ENCODE measurements at regions of chr12 and their contacts with region 1.

Region 1: GRCh38 chr12:122356192-122356635 is 66.3 kb downstream of the CLIP1 start:
- DNase-seq: peak; percentile 74
- H3K4me3 Mint-ChIP-seq: no peak overlapping the region
- H3K27ac Mint-ChIP-seq: peak overlapping the region; percentile 21
- H3K4me1 Mint-ChIP-seq: peaks cover 14% of the 10 kb centered on the region
- H3K27me3 Mint-ChIP-seq: no peaks in the 10 kb centered on the region

Region 2: DNA sequence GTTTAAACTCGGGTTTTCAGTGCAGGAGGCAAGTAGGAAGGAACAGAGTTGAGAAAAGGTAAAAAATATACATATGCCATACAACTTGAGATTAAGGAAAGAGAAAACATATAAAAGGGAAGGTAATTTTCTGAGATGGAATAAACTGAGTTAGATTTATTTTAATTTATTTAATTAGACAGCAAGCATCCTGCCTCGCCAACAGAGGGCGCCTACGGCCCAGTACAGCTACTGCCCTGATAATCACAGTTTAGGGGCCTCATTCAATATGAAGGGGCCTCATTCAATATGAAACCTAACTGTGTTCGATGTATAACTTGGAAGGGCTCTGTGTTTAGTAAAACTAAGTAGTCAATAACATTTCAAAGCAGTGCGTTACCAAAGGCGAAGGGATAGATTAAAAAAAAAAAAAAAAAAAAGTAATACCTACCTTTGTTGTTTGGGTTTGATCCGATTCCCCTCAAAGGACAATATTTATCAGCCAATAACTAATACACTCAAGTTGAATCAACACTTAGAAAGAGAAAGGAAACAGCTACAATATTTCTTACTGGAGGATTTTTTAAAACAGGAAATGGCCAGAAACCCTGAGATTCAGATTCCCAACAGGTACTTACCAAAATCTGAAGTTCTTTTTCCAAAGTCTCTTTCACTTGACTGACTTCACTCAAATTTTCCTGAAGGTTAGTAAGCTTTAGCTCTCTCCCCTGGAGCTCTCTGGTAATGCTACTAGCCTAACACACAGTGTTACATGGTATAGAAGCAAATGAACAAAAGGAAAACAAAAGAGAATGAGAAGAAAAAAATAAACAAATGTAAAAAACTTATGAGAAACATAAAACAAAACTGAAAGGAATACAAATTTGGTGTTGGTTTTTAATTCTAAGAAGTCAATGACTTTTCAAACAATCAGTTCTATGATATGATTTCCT is 19.9 kb before region 1 on chr12:
- CTCF ChIA-PET with region 1: interaction called, 21 read pairs
- POLR2A ChIA-PET with region 1: interaction called, 3 read pairs
- DNase-seq: peak; percentile 54
- H3K4me3 Mint-ChIP-seq: no peak overlapping the region
- H3K27ac Mint-ChIP-seq: peak overlapping the region; percentile 71
- H3K4me1 Mint-ChIP-seq: peaks cover 16% of the 10 kb centered on the region
- H3K27me3 Mint-ChIP-seq: no peaks in the 10 kb centered on the region

Measured in activated CD4-positive, alpha-beta T cell treated with anti-CD3 and anti-CD28 coated beads, Interleukin-2, amount 10 ng/mL, durations not matched to agents 7 days and 5 days (primary cell).